Esophagus squamous epithelium (tissue), 5 donors: ENCODE measurements at regions of chr4 and their contacts with region 1.

Region 1: GRCh38 chr4:165207431-165208220 is at the start of gene KLHL2:
- DNase-seq: peak; percentile 29
- H3K4me3 ChIP-seq: peak within 1 kb of the TSS; percentile 81 to 96 (median 96)
- H3K27ac ChIP-seq: peak within 1 kb of the TSS; percentile 81 to 95 (median 93)
- H3K4me1 ChIP-seq: peaks cover 9 to 60% (median 23%) of the 10 kb centered on the region in 3 donors
- H3K27me3 ChIP-seq: no peaks in the 10 kb centered on the region
- CTCF ChIP-seq: no peak
- POLR2A ChIP-seq: peak in 2 of 4 donors; percentile 50 to 52
- total RNA-seq, gene KLHL2: 25.6 to 44.3 (median 30.8) TPM

Region 2: GRCh38 chr4:164068392-164068791 is 1139.2 kb before region 1 on chr4:
- intact Hi-C with region 1: no loop called
- DNase-seq: no peak
- H3K4me3 ChIP-seq: no peak overlapping the region
- H3K27ac ChIP-seq: no peak overlapping the region
- H3K4me1 ChIP-seq: no peaks in the 10 kb centered on the region
- H3K27me3 ChIP-seq: no peaks in the 10 kb centered on the region
- CTCF ChIP-seq: no peak
- POLR2A ChIP-seq: no peak

Region 3: GRCh38 chr4:165327211-165328100 is 119.8 kb after region 1 on chr4 and contains the start of gene MSMO1:
- intact Hi-C with region 1: loop called (anchors 5 kb)
- DNase-seq: peak; percentile 95
- H3K4me3 ChIP-seq: peak within 1 kb of the TSS; percentile 71 to 97 (median 86)
- H3K27ac ChIP-seq: peak within 1 kb of the TSS; percentile 85 to 96 (median 90)
- H3K4me1 ChIP-seq: peaks cover 7 to 67% (median 17%) of the 10 kb centered on the region in 3 donors
- H3K27me3 ChIP-seq: no peaks in the 10 kb centered on the region
- CTCF ChIP-seq: peak in 2 of 6 experiments; percentile 4 to 8
- POLR2A ChIP-seq: peak in 3 of 4 donors; percentile 48 to 82 (median 62)
- total RNA-seq, gene MSMO1: 122 to 302 (median 172) TPM

Region 4: GRCh38 chr4:165415910-165416309 is 208.3 kb after region 1 on chr4:
- intact Hi-C with region 1: no loop called
- DNase-seq: no peak
- H3K4me3 ChIP-seq: no peak overlapping the region
- H3K27ac ChIP-seq: no peak overlapping the region
- H3K4me1 ChIP-seq: no peaks in the 10 kb centered on the region
- H3K27me3 ChIP-seq: no peaks in the 10 kb centered on the region
- CTCF ChIP-seq: no peak
- POLR2A ChIP-seq: no peak